Activated CD8-positive, alpha-beta T cell treated with anti-CD3 and anti-CD28 coated beads for 36 hours (primary cell): ENCODE measurements at regions of chr10 and their contacts with region 1.

Region 1: GRCh38 chr10:27099916-27100812 is at the start of gene ANKRD26:
- DNase-seq: peak; percentile 98
- ATAC-seq: peak; percentile 57
- H3K4me3 Mint-ChIP-seq: peak within 1 kb of the TSS; percentile 91
- H3K27ac Mint-ChIP-seq: peak within 1 kb of the TSS; percentile 93
- H3K4me1 Mint-ChIP-seq: peaks cover 42% of the 10 kb centered on the region
- H3K27me3 Mint-ChIP-seq: peaks cover 1% of the 10 kb centered on the region
- CTCF ChIP-seq: no peak
- total RNA-seq, gene ANKRD26: 8.3 to 10.4 TPM

Region 2: DNA sequence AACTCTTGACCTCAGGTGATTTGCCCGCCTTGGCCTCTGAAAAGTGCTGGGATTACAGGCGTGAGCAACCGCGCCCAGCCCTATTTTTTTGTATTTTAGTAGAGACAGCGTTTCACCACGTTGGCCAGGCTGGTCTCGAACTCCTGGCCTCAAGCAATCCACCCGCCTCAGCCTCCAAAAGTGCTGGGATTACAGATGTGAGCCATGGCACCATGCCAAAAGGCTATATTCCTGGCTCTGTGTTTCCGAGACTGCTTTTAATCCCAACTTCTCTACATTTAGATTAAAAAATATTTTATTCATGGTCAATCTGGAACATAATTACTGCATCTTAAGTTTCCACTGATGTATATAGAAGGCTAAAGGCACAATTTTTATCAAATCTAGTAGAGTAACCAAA is 11.1 kb after region 1 on chr10:
- CTCF ChIA-PET with region 1: no interaction called
- POLR2A ChIA-PET with region 1: interaction called, 11 read pairs
- intact Hi-C with region 1: no loop called
- DNase-seq: no peak
- ATAC-seq: no peak
- H3K4me3 Mint-ChIP-seq: no peak overlapping the region
- H3K27ac Mint-ChIP-seq: no peak overlapping the region
- H3K4me1 Mint-ChIP-seq: peaks cover under 1% of the 10 kb centered on the region
- H3K27me3 Mint-ChIP-seq: no peaks in the 10 kb centered on the region
- CTCF ChIP-seq: no peak

Region 3: GRCh38 chr10:27155066-27155754 is 55.0 kb after region 1 on chr10 and contains the start of gene MASTL:
- CTCF ChIA-PET with region 1: interaction called, 6 read pairs
- POLR2A ChIA-PET with region 1: interaction called, 59 read pairs
- intact Hi-C with region 1: loop called (anchors 2 kb)
- DNase-seq: peak; percentile 97
- ATAC-seq: peak; percentile 78
- H3K4me3 Mint-ChIP-seq: peak within 1 kb of the TSS; percentile 91
- H3K27ac Mint-ChIP-seq: peak within 1 kb of the TSS; percentile 100
- H3K4me1 Mint-ChIP-seq: peaks cover 32% of the 10 kb centered on the region
- H3K27me3 Mint-ChIP-seq: no peaks in the 10 kb centered on the region
- CTCF ChIP-seq: no peak
- total RNA-seq, gene MASTL: 40.5 to 43.6 TPM